SK-N-SH (cell line): ENCODE measurements at regions of chr1 and their contacts with region 1.

Region 1: GRCh38 chr1:6033986-6034749 is 11.5 kb upstream of the KCNAB2 start:
- DNase-seq: peak; percentile 91
- H3K4me3 ChIP-seq: peak overlapping the region; percentile 32 to 44
- H3K27ac ChIP-seq: peak overlapping the region in 1 of 2 experiments; percentile 39; a peak in 1 of 4 replicates
- H3K4me1 ChIP-seq: peaks cover 5 to 19% of the 10 kb centered on the region in 2 experiments; a peak in 1 of 4 replicates
- H3K27me3 ChIP-seq: no peaks in the 10 kb centered on the region
- CTCF ChIP-seq: peak; percentile 63
- EP300 ChIP-seq: no peak
- RAD21 ChIP-seq: peak; percentile 50

Region 2: GRCh38 chr1:5992026-5992813 is 41.9 kb before region 1 on chr1 and contains the start of gene NPHP4:
- CTCF ChIA-PET with region 1: interaction called, 10 read pairs
- POLR2A ChIA-PET with region 1: interaction called, 6 read pairs
- DNase-seq: peak; percentile 99
- H3K4me3 ChIP-seq: peak within 1 kb of the TSS; percentile 75 to 88
- H3K27ac ChIP-seq: peak within 1 kb of the TSS; percentile 83 to 88
- H3K4me1 ChIP-seq: peaks cover 0 to 20% of the 10 kb centered on the region in 2 experiments; a peak in 1 of 4 replicates
- H3K27me3 ChIP-seq: no peaks in the 10 kb centered on the region
- CTCF ChIP-seq: peak; percentile 9; the same call in 1 of the 2 replicates
- EP300 ChIP-seq: peak; percentile 15 to 20; a peak in 1 of 4 replicates
- RAD21 ChIP-seq: no peak
- polyA plus RNA-seq, gene NPHP4: 4.6 and 7.0 TPM in 2 replicates

Region 3: GRCh38 chr1:6001992-6002576 is 32.1 kb before region 1 on chr1:
- CTCF ChIA-PET with region 1: interaction called, 21 read pairs
- POLR2A ChIA-PET with region 1: interaction called, 3 read pairs
- DNase-seq: peak; percentile 84
- H3K4me3 ChIP-seq: no peak overlapping the region
- H3K27ac ChIP-seq: peak overlapping the region in 1 of 2 experiments; percentile 71; a peak in 2 of 4 replicates
- H3K4me1 ChIP-seq: peaks cover 0 to 43% of the 10 kb centered on the region in 2 experiments; a peak in 1 of 4 replicates
- H3K27me3 ChIP-seq: no peaks in the 10 kb centered on the region
- CTCF ChIP-seq: no peak
- EP300 ChIP-seq: peak in 1 of 2 experiments; percentile 32; a peak in 1 of 4 replicates
- RAD21 ChIP-seq: no peak

Region 4: DNA sequence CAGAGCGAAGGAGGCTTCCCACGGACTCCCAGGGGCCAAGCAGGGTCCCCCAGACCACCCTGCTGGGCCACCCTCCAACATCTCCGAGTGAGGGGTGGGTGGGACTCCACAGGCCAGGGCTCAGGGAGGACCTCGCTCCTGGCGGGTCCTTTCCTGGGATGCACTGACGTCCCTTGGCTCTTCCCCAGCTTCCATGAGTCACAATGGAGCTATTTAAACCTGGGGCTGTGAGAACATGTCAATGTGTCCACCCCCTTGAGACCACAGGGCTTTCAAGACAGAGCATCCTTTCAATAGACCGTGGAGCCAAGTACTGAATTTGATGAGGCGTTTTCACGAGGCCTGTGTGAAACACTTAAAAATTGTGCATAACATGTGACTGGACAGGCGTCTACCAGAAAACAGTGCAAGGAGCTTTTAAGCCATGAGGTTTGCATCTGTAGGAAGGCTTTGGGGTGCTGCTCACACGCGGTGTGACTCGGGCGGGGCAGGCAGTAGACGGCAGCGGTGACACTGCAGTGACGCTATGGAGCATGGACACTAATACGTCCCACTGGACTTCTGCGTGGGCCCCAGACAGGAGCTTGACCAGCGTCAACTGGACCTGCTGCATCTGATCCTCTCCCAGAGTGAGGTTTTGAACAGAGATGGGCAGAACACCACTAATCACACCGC is 17.8 kb before region 1 on chr1:
- CTCF ChIA-PET with region 1: interaction called, 23 read pairs
- POLR2A ChIA-PET with region 1: no interaction called
- DNase-seq: no peak
- H3K4me3 ChIP-seq: no peak overlapping the region
- H3K27ac ChIP-seq: no peak overlapping the region
- H3K4me1 ChIP-seq: no peaks in the 10 kb centered on the region
- H3K27me3 ChIP-seq: no peaks in the 10 kb centered on the region
- CTCF ChIP-seq: no peak
- EP300 ChIP-seq: no peak
- RAD21 ChIP-seq: no peak

Region 5: DNA sequence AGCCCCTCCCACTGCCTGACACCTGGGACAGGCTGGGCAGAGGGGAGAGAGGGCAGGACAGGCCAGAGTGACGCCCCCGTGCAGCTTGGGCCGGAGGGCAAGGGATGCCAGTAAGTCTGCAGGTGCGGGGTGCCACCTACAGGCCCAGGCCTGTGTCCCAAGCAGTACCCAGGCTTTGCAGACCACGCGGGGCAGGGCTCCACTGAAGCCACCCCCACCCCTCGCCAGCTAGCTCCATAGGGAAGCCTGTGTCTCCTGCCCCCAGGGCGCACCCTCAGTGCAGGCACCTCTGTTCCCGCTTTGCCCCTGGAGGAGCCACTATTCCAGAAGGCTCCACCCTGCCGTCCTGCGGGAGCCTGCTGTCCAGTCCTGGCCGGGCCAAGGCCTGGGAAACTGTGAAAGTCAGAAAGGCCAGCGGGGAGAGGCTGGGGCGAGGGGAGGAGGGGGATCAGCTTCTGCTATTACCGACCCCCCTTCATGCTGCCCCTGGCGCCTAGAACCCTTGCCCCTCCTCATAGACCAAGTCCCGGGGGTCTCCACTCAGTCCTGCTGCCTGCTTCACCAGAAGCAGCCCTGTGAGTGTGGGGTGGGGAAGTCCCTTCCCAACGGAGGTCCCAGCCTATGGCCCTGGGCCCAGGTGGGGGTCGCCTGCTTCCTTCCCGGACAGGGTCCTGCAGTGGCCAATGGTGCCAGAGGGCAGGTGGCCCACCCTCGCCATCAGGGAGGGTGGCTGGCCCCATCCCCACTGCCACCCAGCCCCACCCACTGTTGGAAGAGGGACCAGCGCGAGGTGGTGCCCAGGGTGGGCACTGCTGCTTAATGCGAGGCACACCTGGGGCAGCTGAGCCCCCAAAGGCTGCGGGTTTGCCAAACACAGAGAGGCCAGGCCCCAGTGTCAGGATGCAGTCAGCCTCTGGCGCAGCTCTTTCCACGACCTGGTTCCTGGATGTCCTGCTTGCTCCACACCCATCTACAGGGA is 65.9 kb after region 1 on chr1:
- CTCF ChIA-PET with region 1: interaction called, 11 read pairs
- POLR2A ChIA-PET with region 1: no interaction called
- DNase-seq: peak; percentile 78
- H3K4me3 ChIP-seq: no peak overlapping the region
- H3K27ac ChIP-seq: no peak overlapping the region
- H3K4me1 ChIP-seq: peaks cover 0 to 5% of the 10 kb centered on the region in 2 experiments; a peak in 1 of 4 replicates
- H3K27me3 ChIP-seq: no peaks in the 10 kb centered on the region
- CTCF ChIP-seq: no peak
- EP300 ChIP-seq: no peak
- RAD21 ChIP-seq: peak; percentile 59